ENCODE measurements at regions of chr15 and their contacts with region 1.

Region 1: GRCh38 chr15:69755551-69756310 is 303.1 kb downstream of the RPLP1 start:
- DNase-seq: peak; percentile 63
- ATAC-seq: peak; percentile 84
- H3K4me3 Mint-ChIP-seq: peak overlapping the region; percentile 71
- H3K27ac Mint-ChIP-seq: peak overlapping the region; percentile 89
- H3K4me1 Mint-ChIP-seq: peaks cover 72% of the 10 kb centered on the region
- H3K27me3 Mint-ChIP-seq: no peaks in the 10 kb centered on the region
- CTCF ChIP-seq: no peak

Region 2: GRCh38 chr15:69679623-69680228 is 76.0 kb before region 1 on chr15:
- CTCF ChIA-PET with region 1: no interaction called
- POLR2A ChIA-PET with region 1: interaction called, 3 read pairs
- intact Hi-C with region 1: loop called (anchors 1 kb)
- DNase-seq: peak; percentile 44
- ATAC-seq: peak; percentile 93
- H3K4me3 Mint-ChIP-seq: no peak overlapping the region
- H3K27ac Mint-ChIP-seq: peak overlapping the region; percentile 68
- H3K4me1 Mint-ChIP-seq: peaks cover 25% of the 10 kb centered on the region
- H3K27me3 Mint-ChIP-seq: peaks cover 23% of the 10 kb centered on the region
- CTCF ChIP-seq: no peak

Region 3: DNA sequence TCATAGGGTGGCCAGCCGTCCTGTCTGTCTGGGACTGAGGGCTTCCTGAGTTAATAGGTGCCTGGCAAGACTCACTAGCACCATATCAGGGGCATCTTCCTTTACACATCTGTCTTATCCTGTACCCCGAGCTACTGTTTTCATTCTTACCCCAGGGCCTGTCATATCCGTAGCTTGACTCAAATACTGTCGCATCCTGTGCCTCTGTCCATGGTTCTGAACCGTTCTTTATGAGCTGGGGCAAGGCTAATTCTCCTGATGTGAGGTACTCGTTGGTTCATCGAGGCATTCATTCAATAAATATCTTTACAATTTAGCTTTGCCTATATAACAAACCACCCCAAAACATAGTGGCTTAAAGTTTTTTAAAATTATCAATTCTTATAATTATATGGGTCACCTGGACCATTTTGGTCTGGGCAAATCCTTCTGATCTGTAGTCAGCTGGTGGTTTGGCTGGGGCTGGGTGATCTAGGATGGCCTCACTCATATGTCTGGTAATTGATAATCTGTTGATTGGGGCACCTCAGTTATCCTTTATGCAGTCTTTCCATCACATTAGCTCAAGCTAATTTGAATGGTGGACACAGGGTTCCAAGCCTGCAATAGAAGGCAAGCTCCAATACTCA is 220.7 kb after region 1 on chr15:
- CTCF ChIA-PET with region 1: interaction called, 5 read pairs
- POLR2A ChIA-PET with region 1: interaction called, 12 read pairs
- intact Hi-C with region 1: loop called (anchors 1 kb)
- DNase-seq: no peak
- ATAC-seq: no peak
- H3K4me3 Mint-ChIP-seq: no peak overlapping the region
- H3K27ac Mint-ChIP-seq: peak overlapping the region; percentile 25
- H3K4me1 Mint-ChIP-seq: peaks cover 28% of the 10 kb centered on the region
- H3K27me3 Mint-ChIP-seq: peaks cover 33% of the 10 kb centered on the region
- CTCF ChIP-seq: no peak

Region 4: GRCh38 chr15:70036585-70037291 is 281.0 kb after region 1 on chr15:
- CTCF ChIA-PET with region 1: no interaction called
- POLR2A ChIA-PET with region 1: interaction called, 4 read pairs
- intact Hi-C with region 1: loop called (anchors 1 kb)
- DNase-seq: no peak
- ATAC-seq: peak; percentile 55
- H3K4me3 Mint-ChIP-seq: peak overlapping the region; percentile 76
- H3K27ac Mint-ChIP-seq: peak overlapping the region; percentile 91
- H3K4me1 Mint-ChIP-seq: peaks cover 67% of the 10 kb centered on the region
- H3K27me3 Mint-ChIP-seq: no peaks in the 10 kb centered on the region
- CTCF ChIP-seq: no peak

Region 5: DNA sequence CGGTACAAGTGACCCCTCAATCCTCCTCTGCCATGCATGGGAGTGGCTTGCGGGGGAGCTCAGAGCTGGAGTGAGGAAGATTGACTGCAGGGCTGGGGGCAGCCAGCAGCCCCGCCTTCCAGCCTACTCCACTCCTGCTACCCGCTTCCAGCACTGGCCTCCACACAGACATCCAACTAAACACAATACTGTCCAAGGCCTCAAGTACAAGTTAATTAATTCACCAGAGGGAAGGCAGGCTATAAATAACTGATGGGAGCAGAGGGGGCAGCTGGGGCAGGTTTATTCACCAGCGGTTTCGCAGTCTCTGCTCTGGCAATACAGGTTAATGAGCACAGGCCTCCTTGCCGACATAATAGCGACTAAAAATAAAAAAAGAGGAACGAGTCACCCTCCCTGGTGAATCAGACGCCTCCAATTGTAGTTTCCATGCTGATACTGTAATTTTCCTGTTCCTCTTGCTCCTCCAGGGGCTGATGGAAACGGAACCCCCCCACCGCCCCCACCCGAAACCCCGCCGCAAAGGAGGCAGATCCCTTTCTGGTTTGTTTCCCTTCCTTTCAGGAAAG is 508.4 kb after region 1 on chr15:
- CTCF ChIA-PET with region 1: no interaction called
- POLR2A ChIA-PET with region 1: no interaction called
- intact Hi-C with region 1: loop called (anchors 5 kb)
- DNase-seq: no peak
- ATAC-seq: peak; percentile 51
- H3K4me3 Mint-ChIP-seq: peak overlapping the region; percentile 57
- H3K27ac Mint-ChIP-seq: peak overlapping the region; percentile 18
- H3K4me1 Mint-ChIP-seq: peaks cover 92% of the 10 kb centered on the region
- H3K27me3 Mint-ChIP-seq: no peaks in the 10 kb centered on the region
- CTCF ChIP-seq: no peak

Region 6: GRCh38 chr15:70504299-70504951 is 748.7 kb after region 1 on chr15:
- CTCF ChIA-PET with region 1: no interaction called
- POLR2A ChIA-PET with region 1: interaction called, 14 read pairs
- intact Hi-C with region 1: no loop called
- DNase-seq: peak; percentile 53
- ATAC-seq: peak; percentile 60
- H3K4me3 Mint-ChIP-seq: peak overlapping the region; percentile 70
- H3K27ac Mint-ChIP-seq: peak overlapping the region; percentile 90
- H3K4me1 Mint-ChIP-seq: peaks cover 73% of the 10 kb centered on the region
- H3K27me3 Mint-ChIP-seq: no peaks in the 10 kb centered on the region
- CTCF ChIP-seq: no peak

Measured in activated B cell treated with CpG ODN at 0.5 μM for 24 hours (primary cell).